ENCODE measurements at regions of chrX and their contacts with region 1.

Region 1: DNA sequence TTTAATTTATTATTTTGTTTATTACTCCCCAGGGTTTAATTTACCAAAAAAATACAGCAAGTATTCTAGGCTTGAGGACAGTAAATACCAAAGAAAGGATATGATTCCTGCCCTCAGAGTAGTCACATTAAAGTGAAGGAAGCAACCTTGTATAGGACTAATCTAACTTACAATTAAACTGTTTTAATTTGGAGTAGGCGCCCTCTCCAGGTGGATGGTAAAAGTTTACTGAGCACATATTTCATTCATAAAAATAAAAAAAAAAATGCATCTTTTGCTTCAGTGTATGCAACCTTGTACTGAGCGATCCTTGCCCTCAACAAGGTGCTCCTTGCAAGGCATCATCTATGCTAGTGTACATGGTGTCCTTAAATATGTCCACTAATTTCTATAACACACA is 72.0 kb upstream of the MAGEB16 start:
- DNase-seq: no peak
- ATAC-seq: no peak
- H3K4me3 ChIP-seq: no peak overlapping the region
- H3K4me3 Mint-ChIP-seq: no peak overlapping the region
- H3K27ac ChIP-seq: no peak overlapping the region
- H3K27ac Mint-ChIP-seq: no peak overlapping the region
- H3K4me1 ChIP-seq: no peaks in the 10 kb centered on the region
- H3K4me1 Mint-ChIP-seq: no peaks in the 10 kb centered on the region
- H3K27me3 ChIP-seq: no peaks in the 10 kb centered on the region
- H3K27me3 Mint-ChIP-seq: no peaks in the 10 kb centered on the region
- CTCF ChIP-seq: no peak

Region 2: DNA sequence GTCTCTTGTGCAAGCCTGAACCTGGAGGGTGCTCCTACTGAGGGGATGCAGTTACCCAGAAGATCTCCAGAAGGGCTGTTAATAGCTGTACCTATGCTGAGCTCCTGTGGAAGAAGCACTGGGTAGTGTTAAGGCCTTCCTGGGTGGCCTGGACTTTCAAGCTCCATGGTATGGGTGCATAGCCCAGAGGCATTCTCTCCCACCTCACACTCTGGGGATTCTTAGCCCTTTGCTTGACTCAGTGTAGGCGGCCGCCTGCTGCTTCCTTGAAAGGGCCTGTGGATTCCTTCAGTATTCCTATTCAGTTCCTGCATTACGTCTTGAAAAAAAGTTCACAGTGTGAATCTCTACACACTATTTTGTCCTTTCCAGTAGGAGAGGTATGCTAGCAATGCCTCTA is 163.8 kb before region 1 on chrX:
- CTCF ChIA-PET with region 1: no interaction called
- POLR2A ChIA-PET with region 1: no interaction called
- intact Hi-C with region 1: no loop called
- DNase-seq: no peak
- ATAC-seq: no peak
- H3K4me3 ChIP-seq: no peak overlapping the region
- H3K4me3 Mint-ChIP-seq: no peak overlapping the region
- H3K27ac ChIP-seq: no peak overlapping the region
- H3K27ac Mint-ChIP-seq: no peak overlapping the region
- H3K4me1 ChIP-seq: no peaks in the 10 kb centered on the region
- H3K4me1 Mint-ChIP-seq: no peaks in the 10 kb centered on the region
- H3K27me3 ChIP-seq: no peaks in the 10 kb centered on the region
- H3K27me3 Mint-ChIP-seq: no peaks in the 10 kb centered on the region
- CTCF ChIP-seq: no peak

Region 3: DNA sequence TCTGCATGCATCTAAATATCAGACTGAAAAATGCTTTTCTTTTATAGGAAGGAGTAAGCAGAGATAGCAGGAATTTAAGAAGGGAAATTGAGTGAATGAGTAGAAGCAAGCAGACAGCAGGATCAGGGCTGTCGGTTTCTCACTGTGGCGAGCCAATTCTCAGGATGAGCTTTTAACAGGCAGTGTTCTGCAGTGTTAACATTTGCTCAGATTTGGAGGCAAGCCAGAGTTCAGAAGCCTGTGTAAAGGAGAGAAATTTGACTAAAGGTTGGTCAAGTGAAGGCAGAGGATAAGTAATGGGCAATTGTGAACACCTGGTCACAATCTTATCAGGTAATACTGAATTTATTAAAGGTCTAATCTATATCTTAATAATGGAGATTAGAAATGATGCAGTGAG is 61.3 kb before region 1 on chrX:
- CTCF ChIA-PET with region 1: no interaction called
- POLR2A ChIA-PET with region 1: no interaction called
- intact Hi-C with region 1: loop called in 1 of 2 experiments (anchors 10 kb)
- DNase-seq: no peak
- ATAC-seq: no peak
- H3K4me3 ChIP-seq: no peak overlapping the region
- H3K4me3 Mint-ChIP-seq: no peak overlapping the region
- H3K27ac ChIP-seq: no peak overlapping the region
- H3K27ac Mint-ChIP-seq: no peak overlapping the region
- H3K4me1 ChIP-seq: no peaks in the 10 kb centered on the region
- H3K4me1 Mint-ChIP-seq: no peaks in the 10 kb centered on the region
- H3K27me3 ChIP-seq: no peaks in the 10 kb centered on the region
- H3K27me3 Mint-ChIP-seq: no peaks in the 10 kb centered on the region
- CTCF ChIP-seq: no peak

Region 4: GRCh38 chrX:35786271-35786670 is 60.1 kb after region 1 on chrX:
- CTCF ChIA-PET with region 1: no interaction called
- POLR2A ChIA-PET with region 1: no interaction called
- intact Hi-C with region 1: no loop called
- DNase-seq: no peak
- ATAC-seq: no peak
- H3K4me3 ChIP-seq: no peak overlapping the region
- H3K4me3 Mint-ChIP-seq: no peak overlapping the region
- H3K27ac ChIP-seq: no peak overlapping the region
- H3K27ac Mint-ChIP-seq: no peak overlapping the region
- H3K4me1 ChIP-seq: no peaks in the 10 kb centered on the region
- H3K4me1 Mint-ChIP-seq: no peaks in the 10 kb centered on the region
- H3K27me3 ChIP-seq: no peaks in the 10 kb centered on the region
- H3K27me3 Mint-ChIP-seq: no peaks in the 10 kb centered on the region
- CTCF ChIP-seq: no peak

Measured in CD8-positive, alpha-beta T cell (primary cell).